ENCODE measurements at regions of chr18 and their contacts with region 1.

Region 1: DNA sequence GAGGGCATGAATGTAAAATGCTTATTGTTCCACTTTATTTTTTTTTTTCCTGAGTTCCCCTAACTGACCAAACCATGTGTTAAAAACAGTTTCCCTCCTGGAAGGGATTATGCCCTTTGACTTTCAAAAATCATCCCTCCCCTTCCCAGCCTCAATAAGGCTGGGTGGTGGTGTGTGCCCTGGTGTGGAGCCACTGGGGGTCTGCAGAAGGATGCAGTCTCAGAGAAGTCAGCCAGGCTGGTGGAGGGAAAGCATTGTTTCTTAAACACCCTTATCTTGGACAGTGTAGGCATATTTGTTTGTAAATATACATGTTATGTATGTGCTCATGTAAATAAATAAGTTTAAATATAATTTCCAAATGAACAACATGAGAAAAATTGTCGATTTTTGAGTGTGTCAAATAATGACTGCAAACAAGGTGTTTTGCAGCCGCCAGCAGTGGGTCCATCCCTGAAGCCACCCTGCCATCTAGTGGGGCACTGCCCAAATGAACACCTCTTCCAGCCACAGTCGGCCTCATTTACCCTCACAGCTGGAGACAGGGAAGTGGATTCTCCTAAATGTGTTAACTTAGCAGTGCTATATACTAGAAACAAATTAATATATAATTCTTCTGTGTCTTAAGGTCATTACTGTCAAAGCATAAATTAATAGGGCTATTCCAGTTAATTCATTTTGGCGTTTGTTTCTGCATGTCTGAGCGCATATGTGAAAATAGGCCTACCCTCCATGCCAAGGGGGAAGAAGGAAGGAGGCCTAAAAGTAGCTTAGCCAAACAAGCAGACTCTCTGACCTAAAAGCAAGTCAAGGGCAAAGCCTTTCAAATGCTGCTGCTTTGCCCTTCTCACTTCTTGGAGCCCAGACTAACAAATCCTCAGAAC is 209.6 kb upstream of the PIK3C3 start:
- DNase-seq: peak; percentile 36
- H3K4me3 Mint-ChIP-seq: no peak overlapping the region
- H3K27ac Mint-ChIP-seq: no peak overlapping the region
- H3K4me1 Mint-ChIP-seq: no peaks in the 10 kb centered on the region
- H3K27me3 Mint-ChIP-seq: no peaks in the 10 kb centered on the region

Region 2: DNA sequence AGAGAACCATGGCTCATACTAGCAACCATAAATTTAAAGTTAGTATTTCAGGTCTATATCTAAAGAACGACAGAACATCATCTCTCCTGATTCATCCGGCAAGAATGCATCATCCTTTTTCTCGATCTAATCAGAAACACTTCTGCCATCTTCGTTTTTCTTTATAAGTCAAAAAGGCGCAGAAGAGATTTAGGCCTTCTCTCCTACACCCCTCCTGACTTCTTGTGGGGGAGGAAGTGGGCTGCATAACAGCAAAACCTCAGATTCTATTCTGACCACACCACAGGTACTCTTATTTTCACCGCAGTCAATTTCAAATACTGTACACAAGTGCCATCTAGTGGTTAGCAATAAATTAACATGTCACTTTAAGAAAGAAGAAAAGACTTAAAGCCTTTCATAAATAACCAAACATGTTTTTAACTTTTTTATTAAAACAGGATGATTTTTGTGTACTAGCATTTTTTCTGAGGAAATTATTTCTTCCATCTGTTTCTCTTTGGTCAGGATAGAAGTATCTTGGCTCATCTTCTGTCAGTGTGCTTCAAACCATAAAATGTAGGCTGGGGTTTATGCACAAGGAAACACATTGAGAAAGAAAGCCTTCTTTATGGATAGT is 161.2 kb after region 1 on chr18:
- CTCF ChIA-PET with region 1: no interaction called
- POLR2A ChIA-PET with region 1: no interaction called
- intact Hi-C with region 1: loop called (anchors 5 kb)
- DNase-seq: peak; percentile 48
- H3K4me3 Mint-ChIP-seq: no peak overlapping the region
- H3K27ac Mint-ChIP-seq: no peak overlapping the region
- H3K4me1 Mint-ChIP-seq: peaks cover 16% of the 10 kb centered on the region
- H3K27me3 Mint-ChIP-seq: peaks cover 2% of the 10 kb centered on the region

Measured in activated CD4-positive, alpha-beta memory T cell treated with anti-CD3 and anti-CD28 coated beads for 36 hours (primary cell).